Common myeloid progenitor, CD34-positive (primary cell): ENCODE measurements at regions of chr11 and their contacts with region 1.

Region 1: DNA sequence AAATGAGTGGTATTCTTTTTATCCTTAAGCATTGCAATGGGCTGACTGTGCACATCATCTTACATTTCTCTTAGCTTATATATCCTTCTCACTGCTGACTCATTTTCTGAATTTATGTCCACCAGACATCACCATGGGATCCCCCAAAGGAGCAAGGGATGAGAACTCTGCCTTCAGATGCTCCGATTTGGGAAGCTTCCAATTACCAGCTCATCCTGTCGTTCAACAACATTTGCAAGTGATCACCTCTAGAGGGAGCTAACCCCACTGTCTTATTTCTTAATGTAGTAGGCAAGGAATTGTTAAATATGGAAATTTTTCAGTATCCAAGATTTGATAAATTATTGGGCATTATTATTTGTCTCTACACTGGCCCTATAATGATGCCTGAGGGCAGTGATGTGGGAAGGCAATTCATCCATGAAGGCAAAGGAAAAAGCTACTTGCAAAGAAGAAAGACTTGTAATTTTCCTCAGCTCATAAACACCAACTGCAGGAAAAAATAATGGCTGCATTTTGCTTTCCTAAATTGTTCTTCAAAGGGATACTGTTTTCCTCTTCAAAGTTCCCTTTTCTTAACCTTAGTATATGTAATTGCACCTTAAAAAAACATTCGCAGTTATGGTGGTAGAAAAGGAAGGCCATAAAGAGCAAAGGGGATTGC is 102.4 kb upstream of the FSHB start:
- DNase-seq: peak; percentile 14 to 36 (median 33)
- H3K4me3 ChIP-seq: no peak overlapping the region
- H3K27ac ChIP-seq: no peak overlapping the region
- H3K4me1 ChIP-seq: no peaks in the 10 kb centered on the region
- H3K27me3 ChIP-seq: peaks cover 0 to 4% (median 0%) of the 10 kb centered on the region in 5 experiments

Region 2: GRCh38 chr11:30143098-30143705 is 14.8 kb after region 1 on chr11:
- CTCF ChIA-PET with region 1: interaction called, 33 read pairs
- POLR2A ChIA-PET with region 1: interaction called, 3 read pairs
- DNase-seq: peak; percentile 3 to 21 (median 10)
- H3K4me3 ChIP-seq: no peak overlapping the region
- H3K27ac ChIP-seq: no peak overlapping the region
- H3K4me1 ChIP-seq: no peaks in the 10 kb centered on the region
- H3K27me3 ChIP-seq: no peaks in the 10 kb centered on the region